K562 (cell line): ENCODE measurements at regions of chr3 and their contacts with region 1.

Region 1: DNA sequence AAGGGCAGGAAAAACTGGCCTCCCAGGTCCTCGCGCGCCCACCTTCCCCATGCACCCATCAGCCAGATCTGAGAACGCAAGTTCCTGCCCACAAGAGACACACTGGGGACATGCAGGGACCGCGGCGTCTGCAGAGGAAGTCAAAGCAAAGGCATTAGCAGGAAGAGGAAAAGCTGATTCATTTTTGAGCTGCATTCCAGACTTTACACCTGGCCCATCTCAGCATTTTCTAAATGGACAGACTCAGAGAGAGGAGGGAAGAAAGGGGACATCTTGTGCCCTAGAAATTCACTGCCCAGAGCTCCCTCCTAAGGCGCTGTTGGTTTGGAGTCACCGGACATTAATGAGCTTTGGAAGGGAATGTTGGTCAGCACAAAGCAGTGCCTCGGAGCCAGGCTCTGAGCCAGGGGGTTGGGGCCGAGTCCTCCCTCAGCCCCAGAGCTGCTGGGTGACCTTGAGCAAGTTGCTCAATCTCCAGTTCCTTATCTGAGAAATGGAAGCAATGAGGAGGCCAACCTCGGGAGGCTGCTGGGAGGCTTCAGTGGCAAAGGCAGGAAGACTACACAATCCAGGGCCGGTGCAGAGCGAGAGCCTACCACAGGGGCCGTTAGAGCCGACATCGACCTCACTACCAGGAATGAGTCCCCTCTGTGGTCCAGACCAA is 150.5 kb upstream of the IQSEC1 start:
- DNase-seq: no peak
- ATAC-seq: peak; percentile 19; the same call in 1 of the 3 replicates
- H3K4me3 ChIP-seq: no peak overlapping the region
- H3K27ac ChIP-seq: no peak overlapping the region
- H3K4me1 ChIP-seq: peaks cover 0 to 5% of the 10 kb centered on the region in 2 experiments; a peak in 1 of 5 replicates
- H3K27me3 ChIP-seq: peaks cover 42 to 76% of the 10 kb centered on the region in 2 experiments; a peak in 4 of 5 replicates
- CTCF ChIP-seq: peak in 1 of 3 experiments; percentile 1; a peak in 1 of 6 replicates
- EP300 ChIP-seq: no peak
- POLR2A ChIP-seq: no peak
- RAD21 ChIP-seq: no peak

Region 2: DNA sequence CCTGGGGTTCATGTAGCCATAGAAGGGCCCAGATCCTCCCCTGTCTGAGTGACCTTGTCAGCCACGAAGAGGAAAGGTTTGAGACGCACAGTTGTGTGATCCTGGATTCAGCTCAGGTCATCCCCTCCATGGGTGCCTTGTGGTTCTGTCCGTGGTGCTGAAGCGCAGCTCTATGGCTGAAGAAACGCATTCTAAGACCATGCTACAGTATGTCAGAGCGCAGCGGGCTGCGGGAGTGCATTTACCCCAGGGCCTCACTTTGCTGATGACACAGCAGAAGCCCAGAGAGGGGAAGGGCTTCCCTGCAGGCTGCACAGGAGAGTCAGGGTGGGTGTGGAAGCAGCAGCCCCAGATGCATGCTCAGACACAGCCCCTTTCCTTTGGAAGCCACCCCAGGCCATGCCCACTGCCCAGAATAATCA is 81.7 kb before region 1 on chr3:
- CTCF ChIA-PET with region 1: no interaction called
- POLR2A ChIA-PET with region 1: no interaction called
- in situ Hi-C with region 1: no loop called
- intact Hi-C with region 1: loop called (anchors 5 kb)
- DNase-seq: peak; percentile 63 to 72 (median 68)
- ATAC-seq: peak; percentile 91
- H3K4me3 ChIP-seq: no peak overlapping the region
- H3K27ac ChIP-seq: no peak overlapping the region
- H3K4me1 ChIP-seq: no peaks in the 10 kb centered on the region
- H3K27me3 ChIP-seq: peaks cover 20 to 87% of the 10 kb centered on the region in 2 experiments
- CTCF ChIP-seq: no peak
- EP300 ChIP-seq: no peak
- POLR2A ChIP-seq: no peak
- RAD21 ChIP-seq: no peak

Region 3: DNA sequence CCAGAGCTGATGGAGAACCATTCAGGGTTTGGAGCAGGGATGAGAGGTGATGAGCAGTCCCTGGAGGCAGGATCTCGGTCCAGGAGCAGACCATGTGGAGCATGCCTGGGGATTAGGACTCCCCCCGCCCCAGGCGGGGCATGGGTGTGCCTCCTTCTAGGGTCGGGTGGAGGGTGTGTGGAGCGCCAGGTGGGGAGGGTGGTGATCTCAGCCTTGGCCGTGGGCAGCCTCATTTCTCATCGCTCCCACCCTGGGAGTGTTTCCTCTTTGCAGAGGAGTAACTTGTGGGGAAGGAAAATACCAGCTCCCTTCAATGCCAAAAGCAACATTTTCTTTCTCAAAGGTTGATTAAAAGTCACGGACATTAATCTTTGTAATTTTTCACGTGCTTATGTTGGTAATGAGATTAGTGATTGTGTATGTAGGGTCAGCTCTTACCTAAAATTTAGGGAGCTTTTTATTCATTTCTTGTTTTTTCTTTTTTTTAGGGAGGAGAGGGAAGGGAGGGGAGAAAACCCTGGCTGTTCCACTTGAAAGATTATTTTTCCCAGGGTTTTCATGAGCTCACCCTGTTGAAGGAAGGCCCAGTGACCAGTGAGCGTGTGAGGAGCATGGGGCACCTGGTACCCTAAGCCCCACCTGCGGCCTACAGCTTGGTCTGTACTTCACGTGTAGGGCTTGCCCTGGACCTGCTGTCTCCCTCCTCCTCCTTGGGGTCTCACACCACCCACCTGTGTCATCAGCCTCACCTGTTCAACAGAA is 336.2 kb after region 1 on chr3:
- CTCF ChIA-PET with region 1: no interaction called
- POLR2A ChIA-PET with region 1: no interaction called
- in situ Hi-C with region 1: no loop called
- intact Hi-C with region 1: no loop called
- DNase-seq: no peak
- ATAC-seq: no peak
- H3K4me3 ChIP-seq: no peak overlapping the region
- H3K27ac ChIP-seq: no peak overlapping the region
- H3K4me1 ChIP-seq: peaks cover 6 to 10% of the 10 kb centered on the region in 2 experiments; a peak in 4 of 5 replicates
- H3K27me3 ChIP-seq: peaks cover 10 to 54% of the 10 kb centered on the region in 2 experiments; a peak in 4 of 5 replicates
- CTCF ChIP-seq: no peak
- EP300 ChIP-seq: no peak
- POLR2A ChIP-seq: no peak
- RAD21 ChIP-seq: no peak